ENCODE measurements at regions of chr13 and their contacts with region 1.

Region 1: GRCh38 chr13:49996951-49997895 is at the start of gene TRIM13:
- DNase-seq: peak; percentile 74 to 96
- H3K4me3 ChIP-seq: peak within 1 kb of the TSS; percentile 96 to 99
- H3K27ac ChIP-seq: peak within 1 kb of the TSS; percentile 99 to 100
- H3K4me1 ChIP-seq: peaks cover 13 to 40% of the 10 kb centered on the region in 2 donors
- H3K27me3 ChIP-seq: no peaks in the 10 kb centered on the region
- CTCF ChIP-seq: peak; percentile 61 to 84 (median 78)
- total RNA-seq, gene TRIM13: 13.4 TPM

Region 2: DNA sequence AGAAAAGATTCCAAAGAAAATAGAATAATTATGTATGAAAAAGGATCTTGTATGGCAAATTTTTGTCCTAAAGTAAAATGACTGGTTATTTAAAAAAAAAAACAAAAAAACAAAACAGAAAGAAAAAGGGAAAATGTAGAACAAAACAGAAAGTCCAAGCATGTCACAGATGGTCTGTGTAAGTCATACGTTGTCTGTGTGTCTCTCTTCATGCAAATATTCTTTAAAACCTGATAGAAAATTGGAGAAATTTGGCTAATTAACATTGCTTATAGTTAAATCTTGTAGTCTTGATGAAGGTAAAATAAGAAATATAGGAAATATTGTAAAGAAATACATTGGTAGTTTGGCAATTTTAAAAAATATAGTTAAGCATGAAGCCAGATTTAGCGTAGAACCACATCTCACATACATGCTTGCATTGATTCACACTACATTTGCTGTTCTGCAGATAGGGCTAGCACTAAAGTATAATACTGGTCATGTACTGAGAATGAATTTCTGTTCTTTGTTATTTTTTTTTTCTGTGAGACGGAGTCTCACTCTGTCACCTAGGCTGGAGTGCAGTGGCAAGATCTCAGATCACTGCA is 119.5 kb before region 1 on chr13:
- intact Hi-C with region 1: no loop called
- DNase-seq: no peak
- H3K4me3 ChIP-seq: no peak overlapping the region
- H3K27ac ChIP-seq: no peak overlapping the region
- H3K4me1 ChIP-seq: no peaks in the 10 kb centered on the region
- H3K27me3 ChIP-seq: no peaks in the 10 kb centered on the region
- CTCF ChIP-seq: no peak

Region 3: GRCh38 chr13:49936085-49936940 is 60.9 kb before region 1 on chr13 and contains the start of gene SPRYD7:
- intact Hi-C with region 1: loop called (anchors 1 kb)
- DNase-seq: peak; percentile 92 to 99
- H3K4me3 ChIP-seq: peak within 1 kb of the TSS; percentile 78 to 97
- H3K27ac ChIP-seq: peak within 1 kb of the TSS; percentile 78 to 93
- H3K4me1 ChIP-seq: peaks cover 0 to 17% of the 10 kb centered on the region in 2 donors
- H3K27me3 ChIP-seq: no peaks in the 10 kb centered on the region
- CTCF ChIP-seq: peak; percentile 89 to 97 (median 94)
- total RNA-seq, gene SPRYD7: 1.7 TPM

Region 4: GRCh38 chr13:50033725-50034124 is 36.5 kb after region 1 on chr13:
- intact Hi-C with region 1: no loop called
- DNase-seq: no peak
- H3K4me3 ChIP-seq: no peak overlapping the region
- H3K27ac ChIP-seq: peak overlapping the region; percentile 40 to 41
- H3K4me1 ChIP-seq: peaks cover 3 to 7% of the 10 kb centered on the region in 2 donors
- H3K27me3 ChIP-seq: no peaks in the 10 kb centered on the region
- CTCF ChIP-seq: no peak

Region 5: GRCh38 chr13:50123862-50124536 is 126.8 kb after region 1 on chr13:
- intact Hi-C with region 1: loop called (anchors 1 kb)
- DNase-seq: peak; percentile 92 to 98
- H3K4me3 ChIP-seq: peak overlapping the region; percentile 76 to 90
- H3K27ac ChIP-seq: peak overlapping the region; percentile 100
- H3K4me1 ChIP-seq: peaks cover 0 to 20% of the 10 kb centered on the region in 2 donors
- H3K27me3 ChIP-seq: no peaks in the 10 kb centered on the region
- CTCF ChIP-seq: no peak

Region 6: DNA sequence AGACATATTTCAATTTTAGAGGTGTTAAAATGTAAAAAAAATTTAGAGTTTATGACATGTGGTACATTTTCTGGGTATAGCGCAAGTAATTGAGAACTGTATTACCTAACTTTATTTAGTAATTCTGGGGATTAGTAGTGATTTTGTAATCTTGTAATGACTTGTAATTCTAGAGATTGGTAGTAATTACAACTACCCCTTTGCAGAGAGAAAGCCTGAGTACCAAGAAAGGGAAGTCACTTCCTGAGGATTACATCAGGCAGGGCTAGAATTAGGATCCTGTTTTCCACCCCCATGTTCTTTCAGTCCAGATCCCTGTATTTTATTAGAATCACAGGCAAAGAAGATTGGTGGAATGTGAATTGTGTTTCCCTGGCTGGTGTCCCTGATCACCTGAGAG is 293.0 kb after region 1 on chr13:
- intact Hi-C with region 1: no loop called
- DNase-seq: no peak
- H3K4me3 ChIP-seq: no peak overlapping the region
- H3K27ac ChIP-seq: no peak overlapping the region
- H3K4me1 ChIP-seq: no peaks in the 10 kb centered on the region
- H3K27me3 ChIP-seq: no peaks in the 10 kb centered on the region
- CTCF ChIP-seq: no peak

Region 7: GRCh38 chr13:50410921-50411712 is 413.9 kb after region 1 on chr13:
- intact Hi-C with region 1: loop called (anchors 5 kb)
- DNase-seq: peak in 1 of 2 donors; percentile 69
- H3K4me3 ChIP-seq: no peak overlapping the region
- H3K27ac ChIP-seq: peak overlapping the region; percentile 61 to 65
- H3K4me1 ChIP-seq: peaks cover 14 to 22% of the 10 kb centered on the region in 2 donors
- H3K27me3 ChIP-seq: no peaks in the 10 kb centered on the region
- CTCF ChIP-seq: no peak